Endothelial cell of umbilical vein (primary cell): ENCODE measurements at regions of chr3 and their contacts with region 1.

Region 1: DNA sequence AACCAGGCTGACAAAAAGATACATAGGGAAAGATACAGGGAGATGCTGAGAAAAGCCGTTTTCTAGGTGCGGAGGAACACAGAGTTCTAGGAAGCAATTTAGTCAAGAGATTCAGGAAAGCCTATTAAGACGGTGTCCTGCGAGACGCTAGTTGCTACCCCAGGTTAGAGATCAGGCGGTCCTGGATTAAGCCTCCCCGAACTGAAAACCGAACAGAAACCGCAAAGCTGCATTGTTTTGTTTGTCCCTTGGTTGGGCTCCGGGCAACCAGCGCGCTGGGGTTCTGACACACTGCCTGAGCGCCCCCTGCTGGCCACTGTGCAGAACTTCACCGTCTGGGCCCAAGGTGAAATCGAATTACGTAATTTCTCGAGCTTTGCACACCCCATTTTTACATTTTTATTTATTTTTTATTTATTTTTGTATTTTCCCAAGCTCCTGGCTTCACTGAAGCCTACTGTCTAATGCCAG is 37.3 kb upstream of the NDUFB4 start:
- DNase-seq: peak; percentile 87
- H3K4me3 ChIP-seq: peak overlapping the region; percentile 39 to 85 (median 49)
- H3K27ac ChIP-seq: peak overlapping the region; percentile 96
- H3K4me1 ChIP-seq: peaks cover 26% of the 10 kb centered on the region
- H3K27me3 ChIP-seq: no peaks in the 10 kb centered on the region
- CTCF ChIP-seq: peak; percentile 94
- POLR2A ChIP-seq: no peak

Region 2: GRCh38 chr3:120095226-120095978 is 463.4 kb before region 1 on chr3:
- CTCF ChIA-PET with region 1: interaction called, 4 read pairs
- POLR2A ChIA-PET with region 1: interaction called, 3 read pairs
- dilution Hi-C with region 1: no loop called
- intact Hi-C with region 1: loop called (anchors 2 kb)
- DNase-seq: peak; percentile 92
- H3K4me3 ChIP-seq: peak overlapping the region; percentile 35 to 96 (median 78)
- H3K27ac ChIP-seq: peak overlapping the region; percentile 99
- H3K4me1 ChIP-seq: peaks cover 22% of the 10 kb centered on the region
- H3K27me3 ChIP-seq: no peaks in the 10 kb centered on the region
- CTCF ChIP-seq: no peak
- POLR2A ChIP-seq: peak; percentile 97

Region 3: GRCh38 chr3:120324192-120324591 is 234.6 kb before region 1 on chr3:
- CTCF ChIA-PET with region 1: no interaction called
- POLR2A ChIA-PET with region 1: no interaction called
- dilution Hi-C with region 1: no loop called
- intact Hi-C with region 1: no loop called
- DNase-seq: no peak
- H3K4me3 ChIP-seq: no peak overlapping the region
- H3K27ac ChIP-seq: no peak overlapping the region
- H3K4me1 ChIP-seq: no peaks in the 10 kb centered on the region
- H3K27me3 ChIP-seq: no peaks in the 10 kb centered on the region
- CTCF ChIP-seq: no peak
- POLR2A ChIP-seq: no peak

Region 4: DNA sequence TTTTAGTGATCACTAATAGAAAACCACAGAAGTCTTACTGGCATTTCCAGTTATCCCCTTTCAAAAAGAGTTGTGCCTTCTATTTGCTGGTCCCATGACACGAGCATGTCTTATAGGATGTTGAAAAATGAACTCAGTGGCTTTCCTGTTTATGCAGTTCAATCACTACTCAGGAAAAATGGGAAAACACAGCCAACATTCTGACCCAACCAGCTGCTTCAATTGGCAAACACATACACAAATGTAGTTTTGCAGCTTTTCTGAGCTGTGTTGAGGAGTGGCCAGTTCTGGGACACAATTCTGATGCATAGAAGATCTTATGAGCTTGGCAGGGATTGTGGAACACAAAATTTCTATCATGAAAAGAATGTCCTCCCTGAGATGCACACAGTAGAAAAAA is 148.3 kb before region 1 on chr3:
- CTCF ChIA-PET with region 1: interaction called, 246 read pairs
- POLR2A ChIA-PET with region 1: no interaction called
- dilution Hi-C with region 1: no loop called
- intact Hi-C with region 1: no loop called
- DNase-seq: peak; percentile 75
- H3K4me3 ChIP-seq: no peak overlapping the region
- H3K27ac ChIP-seq: no peak overlapping the region
- H3K4me1 ChIP-seq: no peaks in the 10 kb centered on the region
- H3K27me3 ChIP-seq: no peaks in the 10 kb centered on the region
- CTCF ChIP-seq: no peak
- POLR2A ChIP-seq: no peak

Region 5: DNA sequence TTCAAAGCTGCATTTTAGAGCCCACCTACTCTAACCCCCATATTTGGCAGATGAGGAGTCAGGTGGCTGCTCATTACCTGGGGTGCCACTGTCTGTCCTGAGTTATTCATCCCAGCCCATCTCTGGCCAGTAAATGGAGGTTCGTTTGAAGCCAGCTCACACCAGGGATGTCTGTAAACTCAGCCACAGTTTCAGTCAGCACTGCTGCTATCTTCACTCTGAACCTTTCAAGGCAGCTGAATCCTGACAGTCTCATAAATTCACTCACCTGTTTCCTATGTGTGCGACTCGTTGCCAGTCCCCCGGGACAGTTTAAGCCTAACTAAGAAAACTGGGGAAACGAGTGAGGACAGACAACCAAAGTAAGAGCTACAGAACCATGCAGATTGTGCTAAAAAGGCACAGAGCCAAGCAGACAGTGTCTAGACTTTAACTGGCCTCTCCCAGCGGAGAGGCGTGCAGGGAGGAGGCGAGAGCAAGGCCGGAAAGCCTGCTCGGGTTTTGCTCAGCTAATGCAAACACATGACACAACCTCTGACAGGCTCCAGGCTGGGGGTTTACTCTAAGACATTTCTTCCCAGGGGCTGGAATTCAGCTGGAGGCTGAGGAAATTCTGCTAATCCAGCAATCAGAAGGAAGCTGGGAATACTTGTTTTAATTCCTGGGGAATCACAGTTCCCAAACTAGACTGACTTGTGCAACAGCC is 120.0 kb before region 1 on chr3:
- CTCF ChIA-PET with region 1: interaction called, 31 read pairs
- POLR2A ChIA-PET with region 1: no interaction called
- dilution Hi-C with region 1: no loop called
- intact Hi-C with region 1: loop called (anchors 1 kb)
- DNase-seq: peak; percentile 95
- H3K4me3 ChIP-seq: no peak overlapping the region
- H3K27ac ChIP-seq: peak overlapping the region; percentile 91
- H3K4me1 ChIP-seq: peaks cover 66% of the 10 kb centered on the region
- H3K27me3 ChIP-seq: no peaks in the 10 kb centered on the region
- CTCF ChIP-seq: no peak
- POLR2A ChIP-seq: no peak

Region 6: DNA sequence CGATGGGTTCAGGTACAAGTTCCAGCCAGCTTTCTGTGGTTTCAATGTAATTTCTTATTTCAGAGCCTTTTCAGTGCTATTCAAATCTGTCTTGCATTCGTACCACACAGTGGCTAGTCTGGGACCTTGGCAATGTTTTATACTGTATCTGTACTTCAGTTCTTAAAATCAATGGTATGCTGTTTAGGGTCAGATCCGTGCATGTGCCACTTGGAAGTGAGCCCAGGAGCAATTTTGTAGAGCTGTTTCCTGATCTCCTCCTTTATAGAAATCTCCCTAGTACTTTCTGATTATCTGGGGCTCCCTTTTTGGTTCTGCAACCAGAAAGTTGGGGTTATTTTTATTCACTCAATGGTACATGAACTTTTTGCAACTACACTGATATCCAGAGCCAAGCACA is 22.2 kb before region 1 on chr3:
- CTCF ChIA-PET with region 1: interaction called, 10 read pairs
- POLR2A ChIA-PET with region 1: no interaction called
- dilution Hi-C with region 1: no loop called
- intact Hi-C with region 1: no loop called
- DNase-seq: peak; percentile 20
- H3K4me3 ChIP-seq: no peak overlapping the region
- H3K27ac ChIP-seq: no peak overlapping the region
- H3K4me1 ChIP-seq: no peaks in the 10 kb centered on the region
- H3K27me3 ChIP-seq: peaks cover 0 to 2% of the 10 kb centered on the region in 2 experiments
- CTCF ChIP-seq: no peak
- POLR2A ChIP-seq: no peak

Region 7: DNA sequence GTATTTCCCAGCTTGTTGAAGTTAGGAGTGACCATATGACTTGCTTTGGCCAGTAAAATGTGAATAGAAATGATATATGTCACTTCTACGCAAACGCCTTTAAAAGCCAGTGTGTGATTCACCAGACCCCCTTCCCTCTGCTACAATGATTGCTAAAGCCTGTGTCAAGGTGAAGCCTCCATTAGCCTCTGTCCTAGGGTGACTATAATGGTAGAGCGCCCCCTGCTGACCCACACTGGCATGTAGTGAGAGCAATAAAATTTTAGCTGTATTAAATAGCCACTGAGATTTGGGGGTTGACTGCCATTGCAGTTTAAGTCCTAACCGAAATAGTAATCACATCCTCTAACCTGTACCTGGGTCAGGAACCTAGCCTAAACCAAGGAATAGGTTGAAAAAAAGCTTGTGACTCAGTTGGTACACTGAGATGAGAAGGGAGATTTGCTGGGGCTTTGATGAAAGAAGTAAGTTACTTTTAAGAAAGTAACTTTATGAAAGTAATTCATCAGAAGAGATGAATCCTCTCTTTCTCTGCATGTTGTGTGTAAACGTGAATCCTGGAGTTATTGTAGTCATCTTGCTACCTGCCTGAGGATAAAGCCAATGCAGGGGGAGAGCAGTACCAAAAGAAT is 236.3 kb after region 1 on chr3:
- CTCF ChIA-PET with region 1: interaction called, 228 read pairs
- POLR2A ChIA-PET with region 1: no interaction called
- dilution Hi-C with region 1: no loop called
- intact Hi-C with region 1: loop called (anchors 1 kb)
- DNase-seq: peak; percentile 85
- H3K4me3 ChIP-seq: no peak overlapping the region
- H3K27ac ChIP-seq: no peak overlapping the region
- H3K4me1 ChIP-seq: peaks cover 34% of the 10 kb centered on the region
- H3K27me3 ChIP-seq: no peaks in the 10 kb centered on the region
- CTCF ChIP-seq: peak; percentile 77 to 79
- POLR2A ChIP-seq: no peak

Region 8: GRCh38 chr3:121529308-121529707 is 970.5 kb after region 1 on chr3:
- CTCF ChIA-PET with region 1: interaction called, 6 read pairs
- POLR2A ChIA-PET with region 1: no interaction called
- dilution Hi-C with region 1: no loop called
- intact Hi-C with region 1: loop called (anchors 2 kb)
- DNase-seq: peak; percentile 31
- H3K4me3 ChIP-seq: no peak overlapping the region
- H3K27ac ChIP-seq: no peak overlapping the region
- H3K4me1 ChIP-seq: no peaks in the 10 kb centered on the region
- H3K27me3 ChIP-seq: no peaks in the 10 kb centered on the region
- CTCF ChIP-seq: peak; percentile 22 to 45
- POLR2A ChIP-seq: no peak